B cell (primary cell): ENCODE measurements at regions of chr1 and their contacts with region 1.

Region 1: DNA sequence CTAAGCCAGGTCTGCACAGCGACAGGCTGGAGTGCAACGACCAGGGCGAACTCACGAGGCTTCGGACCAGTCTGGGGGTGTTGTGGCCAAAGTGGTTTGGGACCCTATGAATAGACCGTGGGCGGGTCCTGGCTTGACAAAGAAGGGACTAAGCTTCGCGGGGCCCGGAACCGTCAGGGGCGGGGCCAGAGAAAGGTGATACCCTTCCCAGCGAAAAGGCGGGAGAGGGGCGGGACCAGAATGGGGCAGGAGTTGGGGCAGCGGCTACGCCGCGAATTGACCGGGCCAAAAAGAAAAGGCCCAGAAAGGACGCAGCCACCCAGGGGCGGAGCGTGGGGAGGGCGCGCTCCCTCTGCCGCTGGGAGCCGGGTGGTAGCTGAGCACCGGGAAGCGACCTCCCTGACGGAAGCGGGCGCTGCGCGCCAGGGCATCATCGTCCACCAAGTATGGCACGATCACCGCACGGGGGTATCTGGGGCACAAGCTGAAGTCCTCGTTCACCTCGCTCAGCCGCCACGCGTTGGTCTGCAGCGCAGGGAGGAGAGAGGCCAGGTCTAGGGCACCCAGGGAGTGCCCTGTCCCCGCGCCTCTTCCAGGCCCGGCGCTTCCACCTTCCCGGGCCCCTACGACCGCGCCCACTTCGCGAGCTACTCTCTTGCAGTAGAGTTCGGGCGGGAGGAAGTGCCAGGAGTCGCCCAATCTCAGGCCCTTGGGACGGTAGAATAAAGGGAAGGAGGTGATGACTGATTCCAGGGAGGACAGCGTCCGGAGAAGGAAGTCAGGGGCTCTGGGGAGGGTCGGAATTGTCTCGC is 6.7 kb upstream of the FAM167B start:
- DNase-seq: peak; percentile 75
- ATAC-seq: peak; percentile 79
- H3K4me3 ChIP-seq: peak overlapping the region; percentile 50 to 77 (median 69)
- H3K4me3 Mint-ChIP-seq: peak overlapping the region; percentile 95
- H3K27ac ChIP-seq: peak overlapping the region; percentile 4 to 61
- H3K27ac Mint-ChIP-seq: peak overlapping the region; percentile 93
- H3K4me1 ChIP-seq: peaks cover 16 to 31% of the 10 kb centered on the region in 2 donors
- H3K4me1 Mint-ChIP-seq: peaks cover 20% of the 10 kb centered on the region
- H3K27me3 ChIP-seq: no peaks in the 10 kb centered on the region
- H3K27me3 Mint-ChIP-seq: no peaks in the 10 kb centered on the region
- CTCF ChIP-seq: peak; percentile 30

Region 2: GRCh38 chr1:32205401-32206370 is 34.7 kb before region 1 on chr1 and contains the start of gene IQCC:
- CTCF ChIA-PET with region 1: interaction called, 6 read pairs
- POLR2A ChIA-PET with region 1: interaction called, 6 read pairs
- intact Hi-C with region 1: loop called (anchors 5 kb)
- DNase-seq: peak; percentile 90
- ATAC-seq: peak; percentile 62
- H3K4me3 ChIP-seq: peak within 1 kb of the TSS in 4 of 5 experiments; percentile 59 to 78 (median 62)
- H3K4me3 Mint-ChIP-seq: peak within 1 kb of the TSS; percentile 88
- H3K27ac ChIP-seq: peak within 1 kb of the TSS in 1 of 2 donors; percentile 46
- H3K27ac Mint-ChIP-seq: peak within 1 kb of the TSS; percentile 68
- H3K4me1 ChIP-seq: peaks cover 42 to 58% of the 10 kb centered on the region in 2 donors
- H3K4me1 Mint-ChIP-seq: peaks cover 60% of the 10 kb centered on the region
- H3K27me3 ChIP-seq: no peaks in the 10 kb centered on the region
- H3K27me3 Mint-ChIP-seq: no peaks in the 10 kb centered on the region
- CTCF ChIP-seq: no peak
- total RNA-seq, gene IQCC: 2.0 and 2.1 TPM in 2 replicates

Region 3: GRCh38 chr1:32255072-32256071 is 15.0 kb after region 1 on chr1:
- CTCF ChIA-PET with region 1: interaction called, 84 read pairs
- POLR2A ChIA-PET with region 1: interaction called, 60 read pairs
- intact Hi-C with region 1: loop called (anchors 1 kb)
- DNase-seq: no peak
- ATAC-seq: no peak
- H3K4me3 ChIP-seq: no peak overlapping the region
- H3K4me3 Mint-ChIP-seq: peak overlapping the region; percentile 68
- H3K27ac ChIP-seq: peak overlapping the region in 1 of 2 donors; percentile 50
- H3K27ac Mint-ChIP-seq: peak overlapping the region; percentile 88
- H3K4me1 ChIP-seq: peaks cover 61 to 70% of the 10 kb centered on the region in 2 donors
- H3K4me1 Mint-ChIP-seq: peaks cover 60% of the 10 kb centered on the region
- H3K27me3 ChIP-seq: no peaks in the 10 kb centered on the region
- H3K27me3 Mint-ChIP-seq: no peaks in the 10 kb centered on the region
- CTCF ChIP-seq: no peak

Region 4: GRCh38 chr1:32291708-32292492 is 51.6 kb after region 1 on chr1 and contains the start of gene HDAC1:
- CTCF ChIA-PET with region 1: interaction called, 53 read pairs
- POLR2A ChIA-PET with region 1: interaction called, 46 read pairs
- intact Hi-C with region 1: loop called (anchors 1 kb)
- DNase-seq: peak; percentile 96
- ATAC-seq: peak; percentile 98
- H3K4me3 ChIP-seq: peak within 1 kb of the TSS; percentile 77 to 98 (median 88)
- H3K4me3 Mint-ChIP-seq: peak within 1 kb of the TSS; percentile 100
- H3K27ac ChIP-seq: peak within 1 kb of the TSS; percentile 81 to 87
- H3K27ac Mint-ChIP-seq: peak within 1 kb of the TSS; percentile 99
- H3K4me1 ChIP-seq: peaks cover 41 to 42% of the 10 kb centered on the region in 2 donors
- H3K4me1 Mint-ChIP-seq: peaks cover 39% of the 10 kb centered on the region
- H3K27me3 ChIP-seq: no peaks in the 10 kb centered on the region
- H3K27me3 Mint-ChIP-seq: no peaks in the 10 kb centered on the region
- CTCF ChIP-seq: peak; percentile 1
- total RNA-seq, gene HDAC1: 200 and 205 TPM in 2 replicates

Region 5: DNA sequence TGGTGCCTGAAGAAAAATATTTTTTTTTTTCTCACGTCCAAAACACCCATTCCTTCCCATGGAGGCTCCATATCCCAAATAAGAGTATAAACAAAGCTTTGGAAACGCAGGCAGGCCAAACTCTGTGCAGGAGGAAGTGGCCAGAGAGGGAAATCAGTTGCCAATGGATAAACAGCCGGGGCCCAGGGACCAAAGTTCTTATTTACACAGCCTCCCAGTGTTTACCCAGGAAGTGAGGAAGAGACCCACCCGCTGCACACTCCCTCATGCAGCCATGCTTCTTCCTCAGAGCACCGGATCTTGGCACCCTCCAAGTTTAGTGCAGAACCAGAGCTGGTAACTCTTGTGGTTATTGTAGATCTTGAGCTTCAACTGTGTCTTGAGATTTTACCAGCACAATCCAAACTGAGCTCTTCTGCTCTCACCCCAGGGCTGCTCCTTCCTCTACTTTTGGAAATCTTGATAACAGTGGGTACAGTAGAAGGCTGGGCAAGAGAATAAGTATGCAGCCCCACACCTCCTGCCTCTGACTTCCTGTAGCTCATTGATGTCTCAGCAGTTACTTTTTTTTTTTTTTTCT is 81.5 kb after region 1 on chr1:
- CTCF ChIA-PET with region 1: interaction called, 118 read pairs
- POLR2A ChIA-PET with region 1: interaction called, 14 read pairs
- intact Hi-C with region 1: no loop called
- DNase-seq: no peak
- ATAC-seq: peak; percentile 35
- H3K4me3 ChIP-seq: peak overlapping the region in 3 of 5 experiments; percentile 5 to 34 (median 12)
- H3K4me3 Mint-ChIP-seq: peak overlapping the region; percentile 80
- H3K27ac ChIP-seq: peak overlapping the region; percentile 59 to 63
- H3K27ac Mint-ChIP-seq: peak overlapping the region; percentile 89
- H3K4me1 ChIP-seq: peaks cover 70 to 78% of the 10 kb centered on the region in 2 donors
- H3K4me1 Mint-ChIP-seq: peaks cover 57% of the 10 kb centered on the region
- H3K27me3 ChIP-seq: no peaks in the 10 kb centered on the region
- H3K27me3 Mint-ChIP-seq: no peaks in the 10 kb centered on the region
- CTCF ChIP-seq: no peak